ENCODE measurements at regions of chr5 and their contacts with region 1.

Region 1: DNA sequence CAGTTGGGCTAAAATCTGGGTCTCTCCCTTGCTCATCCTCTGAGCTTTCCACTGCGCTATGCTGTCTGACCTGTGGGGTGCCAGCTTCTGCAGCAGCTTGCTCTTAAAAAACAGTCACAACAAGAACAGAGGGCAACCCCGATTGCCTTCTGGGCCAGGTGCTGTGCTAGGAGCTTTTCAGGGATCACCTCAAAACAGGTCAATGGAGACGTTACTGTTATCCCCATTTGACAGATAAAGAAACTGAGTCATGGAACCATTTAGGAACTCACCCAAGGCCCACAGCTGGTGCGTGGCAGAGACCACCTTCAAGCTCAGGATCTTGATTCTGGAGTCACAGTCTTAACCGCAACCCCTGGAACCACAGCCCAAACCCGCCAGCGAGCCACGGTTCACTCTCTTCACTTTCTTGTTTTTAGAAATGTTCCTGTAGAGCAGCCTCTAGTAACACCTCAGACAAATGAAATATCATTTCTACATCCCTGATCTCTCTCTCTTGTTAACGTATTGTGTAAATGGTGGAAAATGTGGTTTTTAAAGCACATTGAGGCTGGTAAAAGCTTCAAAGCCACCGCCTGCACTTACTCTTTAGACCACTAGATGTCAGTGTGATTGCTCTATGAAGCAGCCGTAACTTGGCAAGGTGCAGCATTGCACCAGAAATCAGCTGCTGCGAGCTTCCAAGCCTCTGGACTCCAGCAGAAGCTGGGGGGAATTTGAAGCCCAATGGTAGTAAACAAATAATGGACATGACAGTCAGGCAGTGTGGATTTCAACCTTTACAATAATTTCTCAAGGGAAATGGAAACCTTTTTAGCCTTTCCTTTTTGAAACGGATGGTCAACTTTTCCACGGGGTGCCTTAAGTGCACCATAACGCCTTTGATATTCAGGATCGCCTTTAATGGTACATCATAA is 1.7 kb downstream of the FYB1 start:
- DNase-seq: peak; percentile 73
- H3K4me3 Mint-ChIP-seq: peak overlapping the region; percentile 46
- H3K27ac Mint-ChIP-seq: peak overlapping the region; percentile 11
- H3K4me1 Mint-ChIP-seq: peaks cover 37% of the 10 kb centered on the region
- H3K27me3 Mint-ChIP-seq: no peaks in the 10 kb centered on the region
- CTCF ChIP-seq: peak; percentile 94

Region 2: DNA sequence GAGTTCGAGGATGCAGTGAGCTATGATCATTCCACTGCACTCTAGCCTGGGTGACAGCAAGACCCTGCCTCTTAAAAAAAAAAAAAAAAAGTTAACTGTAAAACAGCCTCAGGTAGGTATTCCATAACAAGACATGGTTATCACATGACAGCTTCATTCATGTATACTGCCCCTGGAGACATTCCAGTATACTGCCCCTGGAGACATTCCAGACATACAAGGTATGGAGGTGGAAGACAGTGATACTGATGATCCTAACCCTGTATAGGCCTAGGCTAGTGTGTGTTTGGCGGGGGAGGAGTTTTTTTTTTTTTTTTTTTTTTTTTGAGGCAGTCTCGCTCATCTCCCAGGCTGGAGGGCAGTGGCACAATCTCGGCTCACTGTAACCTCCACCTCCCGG is 249.0 kb before region 1 on chr5:
- CTCF ChIA-PET with region 1: no interaction called
- intact Hi-C with region 1: no loop called
- DNase-seq: no peak
- H3K4me3 Mint-ChIP-seq: no peak overlapping the region
- H3K27ac Mint-ChIP-seq: no peak overlapping the region
- H3K4me1 Mint-ChIP-seq: no peaks in the 10 kb centered on the region
- H3K27me3 Mint-ChIP-seq: no peaks in the 10 kb centered on the region
- CTCF ChIP-seq: no peak

Region 3: DNA sequence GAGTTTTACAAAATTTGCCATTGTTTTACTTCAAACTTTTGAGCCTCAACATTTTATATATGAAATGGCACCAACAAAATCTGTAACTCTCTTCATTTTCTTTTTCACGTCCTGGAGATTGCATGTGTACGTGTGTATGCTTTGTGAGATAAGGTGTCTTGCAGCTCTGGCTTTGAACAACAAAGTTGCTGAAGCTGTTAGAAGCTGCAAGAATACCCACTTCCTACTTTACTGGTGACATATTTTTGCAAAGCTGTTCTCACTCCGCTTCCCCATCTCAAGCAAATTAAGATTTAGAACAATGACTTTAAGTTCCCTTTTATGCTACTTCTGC is 40.0 kb before region 1 on chr5:
- CTCF ChIA-PET with region 1: no interaction called
- intact Hi-C with region 1: no loop called
- DNase-seq: no peak
- H3K4me3 Mint-ChIP-seq: no peak overlapping the region
- H3K27ac Mint-ChIP-seq: no peak overlapping the region
- H3K4me1 Mint-ChIP-seq: peaks cover 45% of the 10 kb centered on the region
- H3K27me3 Mint-ChIP-seq: no peaks in the 10 kb centered on the region
- CTCF ChIP-seq: no peak

Region 4: GRCh38 chr5:39256477-39257235 is 39.0 kb after region 1 on chr5:
- CTCF ChIA-PET with region 1: interaction called, 5 read pairs
- intact Hi-C with region 1: loop called (anchors 2 kb)
- DNase-seq: peak; percentile 12
- H3K4me3 Mint-ChIP-seq: peak overlapping the region; percentile 34
- H3K27ac Mint-ChIP-seq: peak overlapping the region; percentile 60
- H3K4me1 Mint-ChIP-seq: peaks cover 43% of the 10 kb centered on the region
- H3K27me3 Mint-ChIP-seq: no peaks in the 10 kb centered on the region
- CTCF ChIP-seq: no peak

Region 5: GRCh38 chr5:39283231-39283818 is 65.7 kb after region 1 on chr5:
- CTCF ChIA-PET with region 1: interaction called, 56 read pairs
- intact Hi-C with region 1: loop called (anchors 1 kb)
- DNase-seq: peak; percentile 79
- H3K4me3 Mint-ChIP-seq: no peak overlapping the region
- H3K27ac Mint-ChIP-seq: peak overlapping the region; percentile 72
- H3K4me1 Mint-ChIP-seq: peaks cover 17% of the 10 kb centered on the region
- H3K27me3 Mint-ChIP-seq: no peaks in the 10 kb centered on the region
- CTCF ChIP-seq: peak; percentile 78

Region 6: DNA sequence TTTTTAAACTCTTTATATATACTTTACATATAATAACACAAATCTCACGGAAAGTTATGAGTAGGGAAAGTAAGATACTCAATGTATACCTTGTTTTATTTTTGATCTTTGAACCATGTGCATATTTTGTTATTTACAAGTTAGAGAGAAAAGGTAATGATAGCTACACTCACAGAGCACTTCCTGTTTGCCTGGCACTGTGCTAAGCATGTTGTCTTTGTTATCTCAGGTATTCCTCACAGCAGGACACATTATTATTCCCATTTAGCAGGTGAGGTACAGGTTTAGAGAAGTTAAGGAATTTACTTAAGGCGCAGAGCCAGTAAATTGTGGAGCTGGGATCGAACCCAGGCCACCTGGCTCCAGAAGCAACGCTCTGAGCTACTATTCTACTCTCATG is 143.7 kb after region 1 on chr5:
- CTCF ChIA-PET with region 1: no interaction called
- intact Hi-C with region 1: no loop called
- DNase-seq: no peak
- H3K4me3 Mint-ChIP-seq: no peak overlapping the region
- H3K27ac Mint-ChIP-seq: peak overlapping the region; percentile 95
- H3K4me1 Mint-ChIP-seq: peaks cover 26% of the 10 kb centered on the region
- H3K27me3 Mint-ChIP-seq: no peaks in the 10 kb centered on the region
- CTCF ChIP-seq: no peak

Region 7: DNA sequence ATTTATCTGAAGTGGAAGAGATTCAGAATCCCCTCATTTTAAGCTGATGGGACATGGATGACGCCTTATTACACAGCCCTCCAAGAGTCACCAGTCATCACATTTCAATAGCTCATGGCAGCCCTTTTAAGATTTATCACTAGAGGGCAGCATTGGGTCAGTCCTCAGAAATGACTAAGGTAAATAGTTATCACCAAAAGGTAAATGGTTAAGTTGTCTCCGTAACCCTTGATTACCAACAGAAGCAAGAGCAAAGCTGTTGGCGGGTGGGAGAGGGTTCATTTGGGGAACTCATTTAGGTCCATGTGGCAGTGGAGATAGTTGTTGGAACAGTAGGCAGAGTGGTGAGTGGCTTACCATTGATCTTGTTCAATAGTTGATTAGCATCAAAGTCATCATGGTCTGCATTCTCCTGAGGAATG is 158.7 kb after region 1 on chr5:
- CTCF ChIA-PET with region 1: interaction called, 11 read pairs
- intact Hi-C with region 1: loop called (anchors 5 kb)
- DNase-seq: peak; percentile 64
- H3K4me3 Mint-ChIP-seq: no peak overlapping the region
- H3K27ac Mint-ChIP-seq: no peak overlapping the region
- H3K4me1 Mint-ChIP-seq: peaks cover 39% of the 10 kb centered on the region
- H3K27me3 Mint-ChIP-seq: no peaks in the 10 kb centered on the region
- CTCF ChIP-seq: peak; percentile 73

Region 8: DNA sequence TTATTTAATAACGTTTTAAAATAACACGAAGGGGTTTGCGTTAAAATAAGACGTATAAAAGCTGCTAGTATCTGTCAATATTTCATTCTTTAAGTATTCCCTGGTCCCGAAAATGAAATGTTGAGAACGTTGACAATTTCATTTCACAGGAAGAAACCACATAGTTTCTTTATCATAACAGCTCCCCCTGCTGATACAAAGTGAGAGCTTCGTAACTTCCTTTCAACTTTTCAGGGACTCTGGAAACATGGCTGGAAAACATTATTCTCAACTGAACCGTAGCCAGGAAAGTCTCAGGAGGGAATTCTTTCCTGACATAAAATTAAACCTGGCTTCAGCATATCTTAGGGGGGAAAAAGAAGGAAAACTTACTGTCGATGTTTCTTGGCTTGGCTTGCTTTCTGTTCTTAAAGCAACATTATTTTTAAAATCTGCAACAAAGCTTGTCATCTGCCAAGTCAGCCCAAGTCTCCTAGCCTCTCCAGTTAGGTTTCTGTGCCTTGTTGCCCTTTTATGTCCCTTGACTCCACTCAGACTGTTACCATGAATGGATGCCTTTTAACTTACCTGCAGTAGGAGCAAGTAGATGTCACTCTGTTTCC is 330.0 kb after region 1 on chr5:
- CTCF ChIA-PET with region 1: interaction called, 9 read pairs
- intact Hi-C with region 1: loop called (anchors 5 kb)
- DNase-seq: peak; percentile 49
- H3K4me3 Mint-ChIP-seq: no peak overlapping the region
- H3K27ac Mint-ChIP-seq: no peak overlapping the region
- H3K4me1 Mint-ChIP-seq: peaks cover 10% of the 10 kb centered on the region
- H3K27me3 Mint-ChIP-seq: no peaks in the 10 kb centered on the region
- CTCF ChIP-seq: peak; percentile 59

Region 9: DNA sequence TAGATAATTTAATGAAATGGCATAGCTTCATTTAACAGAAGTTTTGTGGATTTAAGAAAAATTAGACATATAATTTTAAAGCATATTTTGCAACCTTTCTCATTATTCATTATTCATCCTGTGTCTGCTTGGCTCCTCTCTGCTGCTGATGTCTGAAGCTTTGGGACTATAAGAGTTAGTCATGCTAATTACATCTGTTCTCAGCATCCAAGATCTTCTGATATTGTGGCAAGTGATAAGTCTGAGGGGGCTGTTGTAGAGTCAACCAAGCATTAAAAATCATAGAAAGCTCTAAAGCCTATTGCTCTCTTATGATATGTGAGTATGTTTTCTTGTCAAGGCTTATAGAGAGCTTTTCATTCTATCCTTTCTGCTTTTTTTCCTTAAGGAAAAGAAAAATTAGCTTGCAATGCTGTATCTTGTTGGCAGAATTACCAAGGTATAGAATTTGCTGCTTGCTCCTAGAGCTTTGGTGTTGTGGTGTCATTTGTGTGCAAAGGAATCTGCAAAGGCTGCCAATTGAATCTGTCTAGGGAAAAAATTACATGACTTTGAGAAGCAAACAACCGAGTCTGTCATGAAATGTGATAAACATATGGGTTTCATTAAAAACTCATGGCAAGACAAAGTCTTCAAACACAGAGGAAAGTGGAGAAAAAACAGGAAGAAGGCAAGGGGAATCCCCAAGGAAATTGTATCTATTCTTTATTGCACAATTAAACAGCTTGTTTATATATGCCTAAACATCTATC is 363.3 kb after region 1 on chr5:
- CTCF ChIA-PET with region 1: no interaction called
- intact Hi-C with region 1: no loop called
- DNase-seq: no peak
- H3K4me3 Mint-ChIP-seq: no peak overlapping the region
- H3K27ac Mint-ChIP-seq: no peak overlapping the region
- H3K4me1 Mint-ChIP-seq: peaks cover 18% of the 10 kb centered on the region
- H3K27me3 Mint-ChIP-seq: no peaks in the 10 kb centered on the region
- CTCF ChIP-seq: no peak

Measured in Calu3 (cell line).